WTC11 (cell line): ENCODE measurements at regions of chr11 and their contacts with region 1.

Region 1: GRCh38 chr11:61587521-61588453 is 6.9 kb upstream of the SYT7 start:
- DNase-seq: peak; percentile 96
- ATAC-seq: peak; percentile 80
- H3K4me3 Mint-ChIP-seq: peak overlapping the region; percentile 74
- H3K27ac Mint-ChIP-seq: no peak overlapping the region
- H3K4me1 Mint-ChIP-seq: peaks cover 34% of the 10 kb centered on the region
- H3K27me3 Mint-ChIP-seq: peaks cover 59% of the 10 kb centered on the region
- CTCF ChIP-seq: no peak

Region 2: GRCh38 chr11:60810569-60810968 is 777.2 kb before region 1 on chr11:
- CTCF ChIA-PET with region 1: no interaction called
- POLR2A ChIA-PET with region 1: no interaction called
- DNase-seq: no peak
- ATAC-seq: no peak
- H3K4me3 Mint-ChIP-seq: no peak overlapping the region
- H3K27ac Mint-ChIP-seq: no peak overlapping the region
- H3K4me1 Mint-ChIP-seq: no peaks in the 10 kb centered on the region
- H3K27me3 Mint-ChIP-seq: 0 out of 2 replicates have a peak, but pooled peaks cover 6% of the 10 kb centered on the region
- CTCF ChIP-seq: no peak

Region 3: GRCh38 chr11:61509043-61510029 is 78.5 kb before region 1 on chr11:
- CTCF ChIA-PET with region 1: interaction called, 20 read pairs
- POLR2A ChIA-PET with region 1: no interaction called
- DNase-seq: peak; percentile 80
- ATAC-seq: peak; percentile 63
- H3K4me3 Mint-ChIP-seq: peak overlapping the region; percentile 48
- H3K27ac Mint-ChIP-seq: no peak overlapping the region
- H3K4me1 Mint-ChIP-seq: peaks cover 58% of the 10 kb centered on the region
- H3K27me3 Mint-ChIP-seq: peaks cover 59% of the 10 kb centered on the region
- CTCF ChIP-seq: no peak

Region 4: DNA sequence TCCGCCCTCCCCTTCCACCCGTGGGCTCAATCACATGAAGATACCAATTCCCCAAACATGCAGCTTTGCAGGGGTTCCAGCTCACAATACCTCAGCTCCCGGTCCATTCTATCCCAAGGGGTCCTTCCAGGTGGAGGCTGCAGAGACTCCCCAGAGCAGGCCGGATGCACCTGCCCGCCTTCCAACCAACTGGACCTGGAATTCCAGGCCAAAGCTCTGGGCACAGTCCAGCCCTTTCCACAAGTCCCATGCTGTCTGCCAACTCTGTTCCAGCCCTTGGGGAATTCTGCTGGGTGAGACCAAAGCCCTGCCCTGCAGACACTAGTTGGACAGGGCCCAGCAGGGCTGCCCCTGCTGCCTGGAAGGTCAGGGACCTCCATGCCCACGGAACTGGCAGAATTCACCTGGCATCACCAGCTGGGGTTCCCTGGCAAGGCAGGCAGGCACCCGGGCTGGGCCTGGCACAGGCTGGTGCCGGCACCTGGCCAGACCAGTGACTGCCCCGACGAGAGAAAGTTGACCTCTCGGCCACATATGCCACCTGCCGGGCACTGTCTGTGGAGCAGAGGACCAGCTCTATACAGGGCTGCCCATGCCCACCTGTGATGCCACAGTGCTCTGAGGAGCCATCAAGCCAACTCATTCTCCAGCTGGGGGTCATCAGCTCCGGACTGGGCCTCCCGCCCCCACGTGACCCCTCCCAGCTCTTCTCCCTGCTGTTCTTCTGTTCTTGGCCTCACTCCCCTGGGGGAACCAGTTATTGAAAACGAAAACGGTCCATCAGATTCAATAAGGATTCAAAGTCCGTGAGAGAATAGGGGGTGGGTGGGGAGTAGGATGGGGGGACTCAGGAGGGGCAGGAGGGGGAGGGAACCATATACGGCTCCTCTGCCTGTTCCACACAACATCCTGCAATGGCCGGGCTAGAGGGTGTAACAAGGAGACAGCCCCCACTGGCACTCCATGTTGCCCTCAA is 11.6 kb before region 1 on chr11:
- CTCF ChIA-PET with region 1: interaction called, 26 read pairs
- POLR2A ChIA-PET with region 1: no interaction called
- DNase-seq: no peak
- ATAC-seq: no peak
- H3K4me3 Mint-ChIP-seq: no peak overlapping the region
- H3K27ac Mint-ChIP-seq: no peak overlapping the region
- H3K4me1 Mint-ChIP-seq: peaks cover 34% of the 10 kb centered on the region
- H3K27me3 Mint-ChIP-seq: peaks cover 21% of the 10 kb centered on the region
- CTCF ChIP-seq: no peak

Region 5: GRCh38 chr11:61609980-61610366 is 22.2 kb after region 1 on chr11:
- CTCF ChIA-PET with region 1: interaction called, 18 read pairs
- POLR2A ChIA-PET with region 1: no interaction called
- DNase-seq: peak; percentile 67
- ATAC-seq: peak; percentile 93
- H3K4me3 Mint-ChIP-seq: no peak overlapping the region
- H3K27ac Mint-ChIP-seq: no peak overlapping the region
- H3K4me1 Mint-ChIP-seq: peaks cover 21% of the 10 kb centered on the region
- H3K27me3 Mint-ChIP-seq: peaks cover 2% of the 10 kb centered on the region; the same call in 1 of the 2 replicates
- CTCF ChIP-seq: no peak

Region 6: DNA sequence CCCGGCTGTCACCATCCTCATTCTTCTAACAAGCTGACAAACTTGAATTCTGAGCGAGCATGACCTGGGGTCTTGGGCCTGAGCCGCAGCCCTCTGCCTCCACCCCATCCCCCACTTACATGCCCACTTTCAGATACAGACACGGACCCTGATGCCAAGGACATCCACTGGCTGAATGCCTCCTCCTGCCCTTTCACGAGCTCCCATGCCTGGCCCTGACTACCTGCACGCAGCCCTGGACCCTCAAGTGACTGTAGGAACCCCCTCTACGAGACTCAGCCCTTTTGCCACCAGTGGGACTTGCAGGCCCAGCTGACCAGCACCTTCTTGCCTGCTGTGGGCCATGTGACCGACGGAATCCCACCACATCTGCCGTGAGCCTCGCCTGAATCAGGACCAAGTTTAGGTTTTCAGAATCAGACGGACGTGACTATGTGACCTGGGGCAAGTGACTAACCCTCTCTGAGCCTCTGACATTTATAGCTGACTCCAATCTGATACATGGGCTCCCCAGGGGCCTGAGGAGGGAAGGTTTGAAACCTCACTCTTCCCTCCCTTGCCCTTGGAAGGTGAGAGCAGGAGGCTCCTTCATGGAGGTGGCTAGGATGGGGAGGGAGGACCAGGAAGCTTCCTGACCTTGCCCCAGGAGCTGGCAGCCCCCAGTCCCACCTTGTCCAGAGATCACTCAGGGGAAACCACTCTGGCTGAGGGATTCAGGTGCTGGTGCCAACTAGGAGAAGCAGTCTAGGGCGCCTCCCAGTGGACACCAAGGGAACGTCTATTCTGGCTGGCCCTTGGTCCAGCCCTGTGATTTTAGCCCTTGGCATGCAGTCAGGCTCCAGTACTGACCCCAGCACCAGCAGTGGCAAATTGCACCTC is 40.0 kb after region 1 on chr11:
- CTCF ChIA-PET with region 1: interaction called, 86 read pairs
- POLR2A ChIA-PET with region 1: no interaction called
- DNase-seq: peak; percentile 87
- ATAC-seq: peak; percentile 79
- H3K4me3 Mint-ChIP-seq: no peak overlapping the region
- H3K27ac Mint-ChIP-seq: peak overlapping the region; percentile 70
- H3K4me1 Mint-ChIP-seq: peaks cover 50% of the 10 kb centered on the region
- H3K27me3 Mint-ChIP-seq: no peaks in the 10 kb centered on the region
- CTCF ChIP-seq: peak; percentile 92